Gastrocnemius medialis (tissue), 4 donors: ENCODE measurements at regions of chr6 and their contacts with region 1.

Region 1: DNA sequence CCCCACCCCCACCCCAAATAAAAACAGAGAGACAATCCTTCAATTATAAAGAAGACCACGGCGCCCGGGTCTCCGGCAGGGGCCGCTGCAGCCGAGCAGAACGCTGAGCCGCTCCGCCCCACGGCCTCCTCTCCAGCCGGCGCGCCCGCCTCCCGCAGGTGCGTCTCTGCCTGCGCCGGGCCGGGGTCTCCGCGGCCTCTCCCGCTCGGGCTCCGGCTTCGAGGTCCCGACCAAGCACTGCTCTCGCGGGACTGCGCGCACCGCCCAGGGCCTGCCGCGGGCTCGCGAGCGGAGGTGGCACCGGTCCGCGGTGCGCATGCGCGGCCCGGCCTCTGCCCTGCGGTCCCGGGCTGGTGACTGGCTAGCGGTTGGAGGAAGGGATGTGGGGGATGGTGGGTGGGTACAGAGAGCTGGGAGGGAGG is 241 bp upstream of the SIRT5 start:
- DNase-seq: peak; percentile 90 to 92
- ATAC-seq: peak; percentile 88 to 93
- H3K4me3 ChIP-seq: peak overlapping the region; percentile 76 to 98 (median 84)
- H3K27ac ChIP-seq: peak overlapping the region; percentile 93 to 99 (median 98)
- H3K4me1 ChIP-seq: peaks cover 15 to 17% of the 10 kb centered on the region in 2 donors
- H3K27me3 ChIP-seq: no peaks in the 10 kb centered on the region
- CTCF ChIP-seq: peak; percentile 50 to 69 (median 64)
- POLR2A ChIP-seq: no peak

Region 2: GRCh38 chr6:13336553-13336952 is 237.6 kb before region 1 on chr6:
- in situ Hi-C with region 1: no loop called
- intact Hi-C with region 1: loop called (anchors 1 kb)
- DNase-seq: peak; percentile 44 to 68
- ATAC-seq: peak; percentile 74 to 91
- H3K4me3 ChIP-seq: no peak overlapping the region
- H3K27ac ChIP-seq: peak overlapping the region in 1 of 4 donors; percentile 13
- H3K4me1 ChIP-seq: no peaks in the 10 kb centered on the region
- H3K27me3 ChIP-seq: no peaks in the 10 kb centered on the region
- CTCF ChIP-seq: peak; percentile 62 to 95 (median 88)
- POLR2A ChIP-seq: no peak

Region 3: GRCh38 chr6:13487122-13488014 is 86.8 kb before region 1 on chr6 and contains the start of gene GFOD1:
- in situ Hi-C with region 1: no loop called
- intact Hi-C with region 1: loop called (anchors 10 kb)
- DNase-seq: peak; percentile 82 to 83
- ATAC-seq: peak; percentile 75 to 84
- H3K4me3 ChIP-seq: peak within 1 kb of the TSS; percentile 80 to 96 (median 89)
- H3K27ac ChIP-seq: peak within 1 kb of the TSS; percentile 87 to 98 (median 94)
- H3K4me1 ChIP-seq: peaks cover 26 to 35% of the 10 kb centered on the region in 2 donors
- H3K27me3 ChIP-seq: no peaks in the 10 kb centered on the region
- CTCF ChIP-seq: peak in 4 of 5 experiments; percentile 20 to 29 (median 24)
- POLR2A ChIP-seq: peak; percentile 91 to 97
- total RNA-seq, gene GFOD1: 9.0 to 31.8 (median 16.9) TPM

Region 4: GRCh38 chr6:13538084-13538483 is 36.1 kb before region 1 on chr6:
- in situ Hi-C with region 1: no loop called
- intact Hi-C with region 1: loop called (anchors 2 kb)
- DNase-seq: no peak
- ATAC-seq: peak; percentile 85 to 86
- H3K4me3 ChIP-seq: no peak overlapping the region
- H3K27ac ChIP-seq: peak overlapping the region in 2 of 4 donors; percentile 14 to 17
- H3K4me1 ChIP-seq: peaks cover 0 to 3% of the 10 kb centered on the region in 2 donors
- H3K27me3 ChIP-seq: no peaks in the 10 kb centered on the region
- CTCF ChIP-seq: peak; percentile 56 to 68 (median 61)
- POLR2A ChIP-seq: no peak

Region 5: GRCh38 chr6:13711733-13712598 is 137.8 kb after region 1 on chr6 and contains the start of gene RANBP9:
- in situ Hi-C with region 1: no loop called
- intact Hi-C with region 1: loop called (anchors 2 kb)
- DNase-seq: peak; percentile 79 to 91
- ATAC-seq: peak; percentile 77 to 79
- H3K4me3 ChIP-seq: peak within 1 kb of the TSS; percentile 70 to 91 (median 77)
- H3K27ac ChIP-seq: peak within 1 kb of the TSS; percentile 91 to 99 (median 96)
- H3K4me1 ChIP-seq: peaks cover 25 to 33% of the 10 kb centered on the region in 2 donors
- H3K27me3 ChIP-seq: no peaks in the 10 kb centered on the region
- CTCF ChIP-seq: no peak
- POLR2A ChIP-seq: peak; percentile 88 to 94
- total RNA-seq, gene RANBP9: 44.7 to 93.1 (median 63.3) TPM

Region 6: DNA sequence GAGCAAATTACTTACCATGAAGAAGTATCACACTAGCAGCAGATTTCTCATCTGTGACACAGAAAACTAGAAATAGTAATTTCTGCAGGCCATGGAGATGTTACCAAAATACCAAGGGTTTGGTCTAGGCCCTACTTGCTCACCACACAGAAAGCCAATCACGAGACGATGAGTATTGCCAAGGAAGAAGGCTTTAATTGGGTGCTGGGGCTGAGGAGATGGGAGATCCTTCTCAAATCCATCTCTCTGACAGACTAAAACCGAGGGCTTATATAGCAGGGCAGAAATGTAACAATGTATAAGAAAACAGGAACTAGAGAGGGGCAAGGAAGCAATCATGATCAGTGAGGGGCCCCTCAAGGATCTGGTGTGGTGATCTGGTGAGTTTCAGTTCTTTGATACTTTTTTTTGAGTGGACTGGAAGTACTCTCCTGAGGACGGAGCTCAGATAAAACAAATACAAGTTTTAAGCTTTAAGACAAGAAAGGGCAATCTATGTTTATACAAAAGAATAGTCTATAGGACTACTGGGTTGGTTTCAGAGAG is 391.5 kb after region 1 on chr6:
- in situ Hi-C with region 1: no loop called
- intact Hi-C with region 1: no loop called
- DNase-seq: no peak
- ATAC-seq: no peak
- H3K4me3 ChIP-seq: no peak overlapping the region
- H3K27ac ChIP-seq: no peak overlapping the region
- H3K4me1 ChIP-seq: no peaks in the 10 kb centered on the region
- H3K27me3 ChIP-seq: peaks cover 0 to 3% (median 0%) of the 10 kb centered on the region in 3 donors
- CTCF ChIP-seq: no peak
- POLR2A ChIP-seq: no peak

Region 7: DNA sequence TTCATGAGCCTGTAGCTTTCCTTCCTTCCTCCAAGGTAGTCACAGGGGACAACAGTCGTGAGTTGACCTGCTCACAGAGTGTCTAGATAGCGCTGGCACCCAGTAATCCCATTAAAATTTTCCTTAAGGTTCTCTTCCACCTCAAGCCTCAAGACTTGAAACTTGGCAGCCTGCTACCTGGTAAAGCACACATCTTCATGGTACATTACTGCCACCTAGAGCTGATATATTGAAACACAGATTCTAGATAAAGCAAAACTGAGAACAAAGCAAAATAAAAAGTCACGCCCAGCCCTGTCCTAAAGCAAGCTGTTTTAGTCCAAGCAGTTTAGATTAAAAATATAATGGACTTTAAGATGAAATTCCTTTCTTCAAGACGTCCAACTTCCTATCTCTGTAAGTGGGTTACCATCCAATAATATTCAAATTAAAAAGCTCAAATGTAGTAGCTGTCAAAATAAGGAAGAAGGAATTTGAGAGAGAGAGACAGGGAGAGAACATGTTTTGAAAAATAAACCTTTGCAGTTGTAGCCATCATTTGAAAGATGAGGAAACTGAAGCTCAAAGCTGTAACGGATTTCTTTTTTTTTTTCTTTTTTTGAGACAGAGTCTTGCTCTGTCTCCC is 492.7 kb after region 1 on chr6:
- in situ Hi-C with region 1: loop called in 1 of 4 experiments (anchors 25 kb)
- intact Hi-C with region 1: no loop called
- DNase-seq: no peak
- ATAC-seq: peak; percentile 56 to 78
- H3K4me3 ChIP-seq: no peak overlapping the region
- H3K27ac ChIP-seq: no peak overlapping the region
- H3K4me1 ChIP-seq: no peaks in the 10 kb centered on the region
- H3K27me3 ChIP-seq: peaks cover 0 to 10% (median 4%) of the 10 kb centered on the region in 3 donors
- CTCF ChIP-seq: peak; percentile 54 to 70 (median 62)
- POLR2A ChIP-seq: no peak